ENCODE measurements at regions of chr4 and their contacts with region 1.

Region 1: GRCh38 chr4:69787879-69788278 is 27.5 kb upstream of the SULT1B1 start:
- DNase-seq: no peak
- ATAC-seq: peak; percentile 51
- H3K4me3 Mint-ChIP-seq: no peak overlapping the region
- H3K27ac Mint-ChIP-seq: no peak overlapping the region
- H3K4me1 Mint-ChIP-seq: no peaks in the 10 kb centered on the region
- H3K27me3 Mint-ChIP-seq: no peaks in the 10 kb centered on the region

Region 2: GRCh38 chr4:69713593-69713992 is 74.3 kb before region 1 on chr4:
- CTCF ChIA-PET with region 1: no interaction called
- POLR2A ChIA-PET with region 1: no interaction called
- intact Hi-C with region 1: loop called in 1 of 2 experiments (anchors 5 kb)
- DNase-seq: no peak
- ATAC-seq: no peak
- H3K4me3 Mint-ChIP-seq: no peak overlapping the region
- H3K27ac Mint-ChIP-seq: no peak overlapping the region
- H3K4me1 Mint-ChIP-seq: no peaks in the 10 kb centered on the region
- H3K27me3 Mint-ChIP-seq: no peaks in the 10 kb centered on the region

Region 3: DNA sequence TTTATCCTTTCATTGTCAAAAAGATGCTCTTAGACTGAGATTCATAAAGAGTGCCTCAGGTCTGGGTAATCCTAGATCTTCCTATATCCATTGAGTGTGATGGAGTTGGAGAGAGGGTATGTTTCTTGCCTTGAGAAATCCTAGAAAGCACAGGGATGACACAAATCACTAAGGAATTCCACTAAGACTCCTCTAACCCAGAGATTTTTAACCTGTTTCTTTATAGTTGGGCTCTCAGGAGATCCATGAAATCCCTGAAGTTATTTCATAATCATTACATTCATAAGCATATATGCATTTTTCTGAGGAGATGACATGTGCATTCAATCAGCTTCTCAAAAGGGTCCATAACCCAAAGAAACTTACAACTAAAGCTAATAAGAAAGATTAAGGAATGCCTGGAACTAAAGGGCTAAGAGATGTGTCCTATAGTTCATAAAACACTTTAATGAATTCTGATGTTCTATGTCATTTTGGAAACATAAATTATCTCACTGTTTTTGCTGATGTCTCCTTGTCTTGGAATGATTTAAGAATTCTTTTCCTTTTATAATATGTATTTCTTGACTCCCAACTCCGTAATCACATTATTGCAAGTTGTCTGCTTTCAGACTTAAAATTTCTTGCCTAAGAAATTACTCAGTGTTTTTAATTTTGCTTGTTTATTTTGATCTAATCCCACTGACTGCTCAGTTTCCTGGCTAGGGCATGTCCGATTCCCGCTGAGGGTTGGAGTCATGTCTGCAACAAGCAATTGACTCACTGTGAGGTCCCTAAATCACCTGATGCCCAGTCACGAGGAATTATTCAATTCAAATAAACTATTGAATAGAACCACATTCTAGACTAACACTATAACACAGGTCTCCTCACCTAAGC is 727.7 kb after region 1 on chr4:
- CTCF ChIA-PET with region 1: no interaction called
- POLR2A ChIA-PET with region 1: no interaction called
- intact Hi-C with region 1: no loop called
- DNase-seq: no peak
- ATAC-seq: no peak
- H3K4me3 Mint-ChIP-seq: no peak overlapping the region
- H3K27ac Mint-ChIP-seq: no peak overlapping the region
- H3K4me1 Mint-ChIP-seq: no peaks in the 10 kb centered on the region
- H3K27me3 Mint-ChIP-seq: peaks cover 9% of the 10 kb centered on the region

Measured in activated CD4-positive, alpha-beta T cell treated with anti-CD3 and anti-CD28 coated beads for 36 hours (primary cell).